ENCODE measurements at regions of chr9 and their contacts with region 1.

Region 1: GRCh38 chr9:133768859-133769425 is 30.8 kb upstream of the SARDH start:
- DNase-seq: peak in 1 of 2 experiments; percentile 63
- H3K4me3 ChIP-seq: no peak overlapping the region
- H3K27ac ChIP-seq: no peak overlapping the region
- H3K4me1 ChIP-seq: no peaks in the 10 kb centered on the region
- H3K27me3 ChIP-seq: no peaks in the 10 kb centered on the region
- CTCF ChIP-seq: peak; percentile 49 to 67 (median 65)
- EP300 ChIP-seq: no peak
- POLR2A ChIP-seq: no peak
- RAD21 ChIP-seq: peak; percentile 58 to 62

Region 2: GRCh38 chr9:133685653-133686504 is 83.1 kb before region 1 on chr9:
- CTCF ChIA-PET with region 1: no interaction called
- POLR2A ChIA-PET with region 1: no interaction called
- DNase-seq: no peak
- H3K4me3 ChIP-seq: no peak overlapping the region
- H3K27ac ChIP-seq: no peak overlapping the region
- H3K4me1 ChIP-seq: no peaks in the 10 kb centered on the region; a peak in 1 of 7 replicates
- H3K27me3 ChIP-seq: no peaks in the 10 kb centered on the region
- CTCF ChIP-seq: no peak
- EP300 ChIP-seq: no peak
- POLR2A ChIP-seq: no peak
- RAD21 ChIP-seq: no peak

Region 3: GRCh38 chr9:133731876-133732638 is 36.9 kb before region 1 on chr9:
- CTCF ChIA-PET with region 1: interaction called, 11 read pairs
- POLR2A ChIA-PET with region 1: no interaction called
- DNase-seq: no peak
- H3K4me3 ChIP-seq: no peak overlapping the region
- H3K27ac ChIP-seq: no peak overlapping the region
- H3K4me1 ChIP-seq: peaks cover 0 to 14% (median 9%) of the 10 kb centered on the region in 4 experiments; a peak in 5 of 7 replicates
- H3K27me3 ChIP-seq: no peaks in the 10 kb centered on the region
- CTCF ChIP-seq: no peak
- EP300 ChIP-seq: no peak
- POLR2A ChIP-seq: no peak
- RAD21 ChIP-seq: no peak

Measured in H1 (cell line).